Activated T-helper 1 cell treated with anti-CD3 and anti-CD28 coated beads, Interleukin-12 subunit alpha, Interleukin-12 subunit beta, Interleukin-2, Interleukin-4 antibody, amounts not matched to agents 30 ng/mL and 10 ng/mL and 1 ng/mL, durations not matched to agents 14 hours and 24 hours and 36 hours (primary cell): ENCODE measurements at regions of chr6 and their contacts with region 1.

Region 1: GRCh38 chr6:111483736-111484632 is 966 bp upstream of the REV3L start:
- DNase-seq: peak; percentile 83
- H3K4me3 Mint-ChIP-seq: peak overlapping the region; percentile 93
- H3K27ac Mint-ChIP-seq: peak overlapping the region; percentile 98
- H3K4me1 Mint-ChIP-seq: peaks cover 56% of the 10 kb centered on the region
- H3K27me3 Mint-ChIP-seq: no peaks in the 10 kb centered on the region

Region 2: DNA sequence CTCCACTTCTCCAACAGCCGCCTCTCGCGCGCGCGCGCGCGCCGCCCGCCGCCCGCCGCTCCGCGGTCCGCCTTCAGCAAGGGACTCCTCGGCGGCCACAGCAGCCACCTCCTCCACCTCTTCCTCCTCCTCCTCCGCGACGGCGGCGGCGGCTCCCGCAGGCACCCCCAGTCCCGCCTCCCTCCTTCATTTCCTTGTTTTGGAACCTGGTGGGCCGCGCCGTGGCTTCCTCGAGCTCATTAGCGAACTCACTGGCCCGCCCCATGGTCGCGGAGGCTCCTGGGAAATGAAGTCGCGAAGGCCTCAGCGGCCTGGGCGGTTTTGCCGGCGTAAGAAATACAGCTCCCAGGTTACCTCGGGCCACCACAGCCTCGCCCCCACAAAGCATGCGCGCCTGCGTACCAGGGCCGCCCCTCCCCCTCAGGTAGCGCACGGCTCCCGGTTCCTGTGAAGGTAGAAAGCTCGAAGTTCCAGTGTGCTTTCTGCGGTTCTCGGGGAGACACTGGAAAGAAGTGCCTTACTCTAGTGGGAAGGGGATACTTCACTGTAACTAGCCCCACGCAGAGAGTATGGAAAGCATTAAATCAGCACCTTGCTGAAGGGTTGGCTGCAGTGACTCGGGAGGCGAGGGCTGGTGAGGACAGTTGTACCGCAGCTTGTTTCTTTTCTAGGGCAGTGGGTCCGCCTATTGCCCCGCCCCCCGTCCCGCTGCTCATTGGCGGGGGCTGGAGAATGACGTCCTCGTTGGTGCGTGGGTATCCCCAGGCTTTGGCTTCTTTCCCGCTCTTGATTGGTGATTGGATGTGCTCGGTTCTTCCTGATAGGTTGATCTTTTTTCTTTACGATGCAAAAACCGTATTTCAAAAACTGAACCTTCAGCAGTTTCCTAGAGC is 668.5 kb before region 1 on chr6 and contains the start of gene CDK19:
- intact Hi-C with region 1: loop called (anchors 1 kb)
- DNase-seq: peak; percentile 97
- H3K4me3 Mint-ChIP-seq: peak within 1 kb of the TSS; percentile 97
- H3K27ac Mint-ChIP-seq: peak within 1 kb of the TSS; percentile 98
- H3K4me1 Mint-ChIP-seq: peaks cover 38% of the 10 kb centered on the region
- H3K27me3 Mint-ChIP-seq: no peaks in the 10 kb centered on the region
- total RNA-seq, gene CDK19: 12.4 and 13.7 TPM in 2 replicates

Region 3: GRCh38 chr6:111087106-111087835 is 396.7 kb before region 1 on chr6 and contains the start of gene SLC16A10:
- intact Hi-C with region 1: loop called (anchors 5 kb)
- DNase-seq: peak; percentile 66
- H3K4me3 Mint-ChIP-seq: peak within 1 kb of the TSS; percentile 88
- H3K27ac Mint-ChIP-seq: peak within 1 kb of the TSS; percentile 18
- H3K4me1 Mint-ChIP-seq: peaks cover 25% of the 10 kb centered on the region
- H3K27me3 Mint-ChIP-seq: peaks cover 14% of the 10 kb centered on the region
- total RNA-seq, gene SLC16A10: 2.8 and 3.2 TPM in 2 replicates

Region 4: DNA sequence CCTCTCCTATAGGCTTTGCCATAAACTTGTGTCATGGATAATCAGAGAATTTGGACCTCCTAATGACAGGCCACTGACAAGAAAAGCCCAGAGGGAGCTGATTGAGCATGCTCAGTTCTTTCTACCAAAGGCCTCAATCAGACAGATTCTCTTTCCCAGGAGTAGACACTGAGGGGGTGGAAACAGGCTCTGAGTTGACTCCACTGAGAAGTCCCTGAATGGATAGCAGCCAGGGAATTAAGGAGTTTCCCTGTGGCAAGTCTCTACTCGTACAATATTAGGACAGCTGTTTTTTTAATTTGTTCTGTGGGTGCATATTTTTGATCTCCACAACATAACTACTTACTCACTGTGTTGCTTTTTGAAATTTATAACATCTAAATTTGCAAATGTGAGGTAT is 333.4 kb before region 1 on chr6:
- intact Hi-C with region 1: no loop called
- DNase-seq: no peak
- H3K4me3 Mint-ChIP-seq: no peak overlapping the region
- H3K27ac Mint-ChIP-seq: no peak overlapping the region
- H3K4me1 Mint-ChIP-seq: no peaks in the 10 kb centered on the region
- H3K27me3 Mint-ChIP-seq: peaks cover 3% of the 10 kb centered on the region

Region 5: GRCh38 chr6:111522393-111523020 is 38.5 kb after region 1 on chr6:
- intact Hi-C with region 1: loop called (anchors 2 kb)
- DNase-seq: no peak
- H3K4me3 Mint-ChIP-seq: no peak overlapping the region
- H3K27ac Mint-ChIP-seq: peak overlapping the region; percentile 36
- H3K4me1 Mint-ChIP-seq: peaks cover 40% of the 10 kb centered on the region
- H3K27me3 Mint-ChIP-seq: no peaks in the 10 kb centered on the region

Region 6: GRCh38 chr6:111605100-111605751 is 121.2 kb after region 1 on chr6:
- intact Hi-C with region 1: loop called (anchors 1 kb)
- DNase-seq: peak; percentile 11
- H3K4me3 Mint-ChIP-seq: peak overlapping the region; percentile 90
- H3K27ac Mint-ChIP-seq: peak overlapping the region; percentile 100
- H3K4me1 Mint-ChIP-seq: peaks cover 56% of the 10 kb centered on the region
- H3K27me3 Mint-ChIP-seq: no peaks in the 10 kb centered on the region

Region 7: GRCh38 chr6:111873178-111874024 is 389.4 kb after region 1 on chr6 and contains the start of gene FYN:
- intact Hi-C with region 1: loop called (anchors 1 kb)
- DNase-seq: peak; percentile 98
- H3K4me3 Mint-ChIP-seq: peak within 1 kb of the TSS; percentile 99
- H3K27ac Mint-ChIP-seq: peak within 1 kb of the TSS; percentile 96
- H3K4me1 Mint-ChIP-seq: peaks cover 44% of the 10 kb centered on the region
- H3K27me3 Mint-ChIP-seq: peaks cover 6% of the 10 kb centered on the region
- total RNA-seq, gene FYN: 347 and 355 TPM in 2 replicates